HEK293 (cell line): ENCODE measurements at regions of chr6 and their contacts with region 1.

Region 1: DNA sequence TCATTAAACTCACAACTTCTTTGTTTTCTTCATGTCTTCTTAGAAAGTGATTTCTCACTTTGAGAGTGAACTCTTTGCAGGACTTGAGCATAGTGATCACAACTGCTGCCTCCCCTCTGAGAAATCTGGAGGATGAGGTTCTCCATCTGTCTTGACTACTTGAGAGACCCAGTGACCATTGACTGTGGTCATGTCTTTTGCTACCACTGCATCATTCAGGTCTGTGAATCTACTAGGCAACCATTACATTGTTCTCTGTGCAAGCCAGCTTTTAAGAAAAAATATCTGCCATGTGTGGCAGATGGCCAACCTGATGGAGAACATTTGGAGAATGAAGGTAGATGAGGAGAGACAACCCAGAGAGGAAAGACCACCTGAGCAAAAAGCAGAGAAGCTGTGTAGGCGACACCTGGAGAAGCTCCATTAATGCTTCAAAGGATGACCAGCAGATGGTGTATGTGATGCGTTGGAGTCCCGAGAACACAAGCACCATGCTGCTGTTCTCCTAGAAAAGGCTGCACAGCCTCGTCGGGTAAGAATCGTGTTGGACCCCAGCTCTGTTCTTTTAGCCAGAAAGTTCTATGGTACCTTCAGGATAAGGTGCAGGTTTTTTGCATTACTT is 25.1 kb upstream of the TRIM26 start:
- H3K4me3 ChIP-seq: no peak overlapping the region
- H3K27ac ChIP-seq: no peak overlapping the region
- H3K4me1 ChIP-seq: no peaks in the 10 kb centered on the region
- CTCF ChIP-seq: peak; percentile 56

Region 2: GRCh38 chr6:30227763-30228487 is 10.4 kb before region 1 on chr6:
- CTCF ChIA-PET with region 1: interaction called, 16 read pairs
- POLR2A ChIA-PET with region 1: interaction called, 10 read pairs
- H3K4me3 ChIP-seq: no peak overlapping the region
- H3K27ac ChIP-seq: no peak overlapping the region
- H3K4me1 ChIP-seq: peaks cover 7% of the 10 kb centered on the region
- CTCF ChIP-seq: no peak